Endothelial cell of umbilical vein (primary cell): ENCODE measurements at regions of chr18 and their contacts with region 1.

Region 1: DNA sequence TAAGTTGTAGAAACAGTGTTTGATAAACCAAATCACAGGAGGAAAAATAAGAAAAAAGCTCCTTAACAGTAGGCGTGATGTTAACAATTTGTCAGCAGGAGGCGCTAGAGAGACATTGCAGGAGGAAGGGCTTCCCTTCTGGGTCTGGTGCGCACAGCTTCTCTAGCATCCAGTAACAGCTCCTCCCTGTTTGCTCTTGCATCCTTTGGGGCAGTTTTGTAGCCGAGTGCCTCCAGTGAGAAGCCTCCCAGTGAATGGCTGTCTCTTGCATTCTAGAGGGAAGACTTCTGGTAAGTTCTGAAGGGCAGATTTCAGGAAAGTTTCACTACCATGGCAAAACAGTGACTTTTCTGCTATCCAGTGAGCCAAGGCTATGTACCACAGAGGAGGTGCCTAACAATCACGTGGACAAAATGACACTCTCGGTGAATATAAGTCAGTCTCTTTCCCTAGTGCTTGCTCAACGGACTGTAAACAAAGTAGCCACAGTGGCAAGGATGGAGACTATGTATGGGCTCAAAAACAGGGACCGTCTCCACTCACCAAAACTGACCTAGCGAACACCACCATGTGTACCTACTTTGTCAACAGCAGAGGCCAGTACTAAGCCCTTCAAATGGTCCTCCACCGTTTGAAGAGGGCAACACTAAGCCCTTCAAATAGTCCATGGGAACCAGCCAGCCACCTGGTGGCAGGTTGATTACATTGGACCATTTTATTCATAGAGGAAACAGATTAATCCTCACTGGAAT is 9.6 kb upstream of the ZNF396 start:
- DNase-seq: peak; percentile 82
- H3K4me3 ChIP-seq: no peak overlapping the region
- H3K27ac ChIP-seq: no peak overlapping the region
- H3K4me1 ChIP-seq: no peaks in the 10 kb centered on the region
- H3K27me3 ChIP-seq: no peaks in the 10 kb centered on the region
- CTCF ChIP-seq: peak; percentile 79 to 83
- POLR2A ChIP-seq: no peak

Region 2: DNA sequence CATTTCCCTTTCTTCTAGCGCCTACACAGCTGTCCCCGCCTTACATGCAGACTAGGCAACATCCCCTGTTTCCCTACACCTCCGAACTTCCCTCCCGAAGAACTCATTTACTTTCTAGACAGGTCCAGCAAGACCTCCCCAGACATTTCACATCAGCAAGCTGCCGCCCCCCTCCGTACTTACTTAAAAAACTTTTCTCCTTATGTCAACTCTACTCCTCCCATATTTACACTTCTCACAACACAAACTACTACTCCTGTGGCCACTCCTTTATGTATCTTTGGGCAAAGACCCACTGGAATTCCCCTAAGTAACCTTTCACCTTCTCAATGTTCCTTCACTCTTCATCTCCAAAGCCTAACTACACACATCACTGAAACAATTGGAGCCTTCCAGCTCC is 166.3 kb before region 1 on chr18:
- CTCF ChIA-PET with region 1: no interaction called
- POLR2A ChIA-PET with region 1: no interaction called
- dilution Hi-C with region 1: no loop called
- intact Hi-C with region 1: no loop called
- DNase-seq: no peak
- H3K4me3 ChIP-seq: no peak overlapping the region
- H3K27ac ChIP-seq: no peak overlapping the region
- H3K4me1 ChIP-seq: no peaks in the 10 kb centered on the region
- H3K27me3 ChIP-seq: peaks cover under 1 to 1% of the 10 kb centered on the region in 2 experiments
- CTCF ChIP-seq: no peak
- POLR2A ChIP-seq: no peak

Region 3: DNA sequence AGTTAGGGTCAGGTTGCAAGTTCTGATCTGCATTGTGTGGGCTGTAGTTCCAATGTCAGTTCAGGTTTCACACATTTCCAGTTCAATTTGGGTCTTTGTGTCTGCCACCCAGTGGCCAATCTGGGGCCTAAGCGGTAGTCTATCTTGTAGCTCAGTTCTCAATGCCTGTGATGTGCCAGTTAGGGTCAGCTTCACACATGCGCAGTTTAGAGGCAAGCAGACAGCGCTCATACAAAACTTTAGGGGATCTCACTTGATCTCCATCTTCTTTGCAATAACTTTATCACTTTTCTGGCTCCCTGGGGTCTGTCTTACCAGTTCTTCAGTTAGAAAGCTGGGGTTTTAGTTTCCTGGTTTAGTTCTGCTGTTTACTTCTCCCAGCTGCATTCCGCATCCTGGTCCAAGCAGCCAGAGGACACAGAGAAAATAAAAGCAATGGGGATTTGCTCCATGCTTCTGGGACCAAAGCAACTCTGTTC is 31.6 kb before region 1 on chr18:
- CTCF ChIA-PET with region 1: interaction called, 17 read pairs
- POLR2A ChIA-PET with region 1: no interaction called
- dilution Hi-C with region 1: no loop called
- intact Hi-C with region 1: no loop called
- DNase-seq: peak; percentile 86
- H3K4me3 ChIP-seq: no peak overlapping the region
- H3K27ac ChIP-seq: no peak overlapping the region
- H3K4me1 ChIP-seq: no peaks in the 10 kb centered on the region
- H3K27me3 ChIP-seq: no peaks in the 10 kb centered on the region
- CTCF ChIP-seq: peak; percentile 81 to 82
- POLR2A ChIP-seq: no peak

Region 4: DNA sequence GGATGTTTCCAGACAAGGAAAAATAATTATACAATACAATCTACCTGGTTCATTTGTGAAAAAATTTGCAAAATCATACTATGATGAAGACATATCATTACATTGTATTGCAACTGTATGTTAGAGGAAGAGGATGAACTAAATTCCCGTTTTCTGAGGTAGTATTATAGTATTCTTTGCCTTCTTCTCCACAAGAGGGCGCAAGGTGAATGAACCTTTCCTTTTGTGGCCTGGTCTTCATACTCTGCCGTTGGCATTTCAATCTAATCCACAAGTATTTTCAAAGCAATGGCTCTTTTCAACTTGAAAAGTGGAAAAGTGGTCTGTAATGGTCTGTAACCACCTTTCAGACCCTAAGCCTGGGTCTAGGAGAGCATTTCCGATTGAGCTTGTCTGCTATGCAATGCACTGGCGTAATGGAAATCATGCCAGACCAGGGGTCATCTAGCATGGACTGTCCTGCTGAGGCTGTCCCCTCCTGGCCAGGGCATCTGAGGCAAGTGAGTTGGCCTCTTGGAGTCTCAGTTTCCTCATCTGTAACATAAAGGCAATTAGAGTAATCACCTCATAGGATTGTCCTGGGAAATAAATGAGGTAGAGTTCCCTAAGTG is 21.2 kb after region 1 on chr18:
- CTCF ChIA-PET with region 1: interaction called, 13 read pairs
- POLR2A ChIA-PET with region 1: interaction called, 4 read pairs
- dilution Hi-C with region 1: no loop called
- intact Hi-C with region 1: loop called (anchors 2 kb)
- DNase-seq: peak; percentile 80
- H3K4me3 ChIP-seq: no peak overlapping the region
- H3K27ac ChIP-seq: peak overlapping the region; percentile 34
- H3K4me1 ChIP-seq: peaks cover 4% of the 10 kb centered on the region
- H3K27me3 ChIP-seq: no peaks in the 10 kb centered on the region
- CTCF ChIP-seq: peak; percentile 58 to 69
- POLR2A ChIP-seq: no peak

Region 5: DNA sequence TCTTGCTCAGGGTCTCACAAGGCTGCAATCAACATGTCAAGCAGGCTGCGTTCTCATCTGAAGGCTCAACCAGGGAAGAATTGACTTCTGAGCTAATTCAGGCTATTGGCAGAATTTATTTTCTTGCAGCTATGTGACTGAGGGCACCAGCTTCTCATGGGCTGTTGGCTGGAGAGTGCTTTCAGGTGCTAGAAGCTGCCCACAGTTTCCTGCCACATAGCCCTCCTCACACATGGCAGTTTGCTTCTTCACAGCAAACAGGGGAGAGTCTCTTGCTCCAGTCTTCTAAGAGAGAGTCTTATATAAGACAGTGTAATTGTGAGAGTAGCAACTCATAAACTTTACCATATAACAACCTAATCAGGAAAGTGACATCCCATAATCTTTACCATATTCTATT is 148.5 kb after region 1 on chr18:
- CTCF ChIA-PET with region 1: no interaction called
- POLR2A ChIA-PET with region 1: no interaction called
- dilution Hi-C with region 1: no loop called
- intact Hi-C with region 1: no loop called
- DNase-seq: no peak
- H3K4me3 ChIP-seq: no peak overlapping the region
- H3K27ac ChIP-seq: no peak overlapping the region
- H3K4me1 ChIP-seq: no peaks in the 10 kb centered on the region
- H3K27me3 ChIP-seq: no peaks in the 10 kb centered on the region
- CTCF ChIP-seq: no peak
- POLR2A ChIP-seq: no peak

Region 6: GRCh38 chr18:35756506-35757117 is 369.8 kb after region 1 on chr18:
- CTCF ChIA-PET with region 1: interaction called, 7 read pairs
- POLR2A ChIA-PET with region 1: no interaction called
- dilution Hi-C with region 1: no loop called
- intact Hi-C with region 1: loop called (anchors 2 kb)
- DNase-seq: peak; percentile 63
- H3K4me3 ChIP-seq: no peak overlapping the region
- H3K27ac ChIP-seq: no peak overlapping the region
- H3K4me1 ChIP-seq: no peaks in the 10 kb centered on the region
- H3K27me3 ChIP-seq: peaks cover 3 to 6% of the 10 kb centered on the region in 2 experiments
- CTCF ChIP-seq: peak; percentile 58 to 75
- POLR2A ChIP-seq: no peak

Region 7: DNA sequence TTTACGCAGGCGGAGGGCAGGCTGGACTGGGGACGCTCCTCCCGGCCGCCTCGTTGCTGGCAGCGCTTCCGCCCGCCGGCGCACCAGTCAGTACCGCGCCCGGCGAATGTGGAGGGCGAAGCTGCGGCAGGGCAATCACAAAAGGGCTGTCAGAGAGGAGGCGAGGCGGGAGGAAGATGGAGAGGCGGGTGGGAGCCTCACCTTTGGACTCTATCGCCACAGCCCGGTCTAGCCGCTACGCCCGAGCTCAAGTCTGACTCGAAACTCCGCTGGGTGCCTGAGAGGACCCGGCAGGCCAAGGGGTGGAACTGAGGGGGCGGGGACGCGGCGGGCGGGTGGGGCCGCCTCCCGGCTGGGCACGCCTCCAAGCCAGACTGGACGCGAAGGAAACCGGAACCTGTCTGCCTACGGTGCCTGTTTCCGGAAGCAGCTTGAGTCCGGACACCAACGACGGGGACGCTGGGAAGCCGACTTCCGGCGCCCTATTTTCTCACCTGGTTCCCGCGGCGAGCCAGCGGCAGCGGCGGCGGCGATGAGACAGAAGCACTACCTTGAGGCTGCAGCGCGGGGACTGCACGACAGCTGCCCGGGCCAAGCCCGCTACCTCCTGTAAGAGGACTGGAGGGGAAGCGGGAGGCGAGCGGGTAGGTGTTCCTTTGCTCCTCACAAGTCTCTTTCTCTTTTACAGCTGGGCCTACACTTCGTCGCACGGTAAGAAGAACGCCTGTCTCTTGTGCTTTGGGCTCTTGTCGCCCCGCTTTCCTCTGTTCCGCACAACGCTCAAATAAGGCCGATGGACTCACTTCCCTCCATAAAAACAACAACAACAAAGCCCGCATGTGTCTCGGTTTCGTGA is 585.6 kb after region 1 on chr18 and contains the start of gene RMP24:
- CTCF ChIA-PET with region 1: interaction called, 6 read pairs
- POLR2A ChIA-PET with region 1: no interaction called
- dilution Hi-C with region 1: no loop called
- intact Hi-C with region 1: loop called (anchors 5 kb)
- DNase-seq: peak; percentile 89
- H3K4me3 ChIP-seq: peak within 1 kb of the TSS; percentile 83 to 99 (median 91)
- H3K27ac ChIP-seq: peak within 1 kb of the TSS; percentile 91
- H3K4me1 ChIP-seq: peaks cover 18% of the 10 kb centered on the region
- H3K27me3 ChIP-seq: peaks cover 4% of the 10 kb centered on the region in 2 experiments
- CTCF ChIP-seq: no peak
- POLR2A ChIP-seq: peak; percentile 78